ENCODE measurements at regions of chr6 and their contacts with region 1.

Region 1: DNA sequence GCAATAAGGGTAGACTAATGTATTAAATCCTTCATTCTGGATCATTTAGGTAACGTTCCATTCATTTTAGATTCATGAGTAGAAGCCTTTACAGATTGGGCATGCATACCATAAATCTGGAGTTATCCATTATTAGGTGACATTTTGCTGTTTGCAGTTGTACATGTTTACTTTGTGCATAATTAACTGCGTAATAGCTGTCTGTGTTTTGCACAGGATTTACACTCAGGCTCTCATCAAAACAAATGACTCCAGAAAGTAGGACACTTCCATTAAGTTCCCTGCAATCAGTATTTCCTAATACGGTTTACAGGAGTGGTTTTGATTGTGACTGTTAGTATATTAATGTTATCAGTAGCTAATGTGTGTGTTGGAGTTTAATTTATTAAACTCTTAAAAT is 997.4 kb downstream of the HACE1 start:
- DNase-seq: no peak
- H3K4me3 ChIP-seq: no peak overlapping the region
- H3K27ac ChIP-seq: no peak overlapping the region
- H3K4me1 ChIP-seq: no peaks in the 10 kb centered on the region
- H3K27me3 ChIP-seq: no peaks in the 10 kb centered on the region
- CTCF ChIP-seq: no peak
- EP300 ChIP-seq: no peak
- POLR2A ChIP-seq: no peak

Region 2: GRCh38 chr6:103750603-103751002 is 111.7 kb before region 1 on chr6:
- in situ Hi-C with region 1: no loop called
- intact Hi-C with region 1: no loop called
- DNase-seq: no peak
- H3K4me3 ChIP-seq: no peak overlapping the region
- H3K27ac ChIP-seq: no peak overlapping the region
- H3K4me1 ChIP-seq: no peaks in the 10 kb centered on the region
- H3K27me3 ChIP-seq: no peaks in the 10 kb centered on the region
- CTCF ChIP-seq: no peak
- EP300 ChIP-seq: no peak
- POLR2A ChIP-seq: no peak

Region 3: GRCh38 chr6:103842615-103843014 is 19.7 kb before region 1 on chr6:
- in situ Hi-C with region 1: no loop called
- intact Hi-C with region 1: loop called (anchors 1 kb)
- DNase-seq: no peak
- H3K4me3 ChIP-seq: no peak overlapping the region
- H3K27ac ChIP-seq: no peak overlapping the region
- H3K4me1 ChIP-seq: no peaks in the 10 kb centered on the region
- H3K27me3 ChIP-seq: no peaks in the 10 kb centered on the region
- CTCF ChIP-seq: no peak
- EP300 ChIP-seq: no peak
- POLR2A ChIP-seq: no peak